RWPE1 (cell line): ENCODE measurements at regions of chr10 and their contacts with region 1.

Region 1: GRCh38 chr10:113089551-113089950 is 139.5 kb downstream of the TCF7L2 start:
- DNase-seq: no peak
- H3K27ac ChIP-seq: peak overlapping the region; percentile 27
- CTCF ChIP-seq: no peak

Region 2: DNA sequence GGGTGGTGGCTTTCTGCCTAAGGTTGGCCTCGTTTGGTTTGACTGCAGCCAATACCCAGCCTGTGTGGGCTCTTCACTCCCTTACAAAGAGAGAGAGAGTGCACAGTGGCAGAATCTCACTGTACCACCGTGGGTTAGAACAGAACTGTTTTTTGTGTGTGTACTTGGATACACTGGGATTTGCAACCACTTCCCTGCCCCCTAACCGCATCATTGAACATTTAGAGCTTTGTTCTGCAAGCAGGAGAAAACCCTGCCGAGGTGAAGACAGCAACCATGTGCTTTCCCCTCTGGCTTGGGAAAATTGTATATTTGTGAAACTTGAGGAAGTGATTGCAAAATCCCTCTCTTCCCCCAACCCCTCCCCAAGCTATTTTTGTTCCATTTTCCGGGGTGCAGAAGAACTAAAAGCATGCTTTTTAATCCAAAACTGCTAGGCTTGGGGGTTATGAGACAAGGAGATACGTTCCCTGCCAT is 61.7 kb after region 1 on chr10:
- CTCF ChIA-PET with region 1: no interaction called
- POLR2A ChIA-PET with region 1: no interaction called
- DNase-seq: no peak
- H3K27ac ChIP-seq: no peak overlapping the region
- CTCF ChIP-seq: no peak

Region 3: DNA sequence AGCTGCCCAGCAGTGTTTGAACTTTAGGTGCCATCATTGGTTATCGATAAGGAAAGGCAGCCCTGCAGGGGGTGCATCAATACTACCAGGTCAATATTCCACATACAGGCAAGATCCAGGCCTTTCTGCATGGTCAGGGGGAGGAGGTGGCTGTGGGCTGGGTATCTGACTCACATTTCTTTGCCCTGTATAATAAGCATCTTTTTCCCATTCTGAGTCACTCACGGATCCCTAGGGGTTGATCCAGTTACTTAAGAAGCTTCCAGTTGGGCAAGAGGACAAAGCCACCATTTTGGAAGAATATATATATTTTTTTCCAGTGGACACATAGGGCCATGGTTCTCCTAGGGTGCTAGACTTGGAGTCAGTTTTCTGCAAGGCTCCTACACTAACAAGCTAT is 349.1 kb after region 1 on chr10:
- CTCF ChIA-PET with region 1: no interaction called
- POLR2A ChIA-PET with region 1: no interaction called
- DNase-seq: peak; percentile 16
- H3K27ac ChIP-seq: no peak overlapping the region
- CTCF ChIP-seq: no peak

Region 4: DNA sequence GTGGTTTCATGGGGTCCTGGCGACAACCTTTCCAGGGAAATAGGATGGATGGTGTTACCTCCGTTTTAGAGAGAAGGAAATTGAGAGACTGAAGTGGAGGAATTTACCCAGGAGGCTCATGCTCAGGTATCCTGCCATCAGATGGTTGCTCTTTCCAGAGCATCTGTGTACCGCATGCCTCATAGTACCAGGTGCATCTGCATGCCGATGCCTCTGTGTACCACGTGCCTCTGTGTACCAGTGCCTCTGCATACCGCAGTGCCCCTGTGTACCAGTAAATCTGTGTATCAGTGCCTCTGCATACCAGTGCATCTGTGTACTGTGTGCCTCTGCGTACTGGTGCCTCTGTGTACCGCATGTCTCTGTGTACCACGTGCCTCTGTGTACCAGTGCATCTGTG is 1152.7 kb after region 1 on chr10:
- CTCF ChIA-PET with region 1: no interaction called
- POLR2A ChIA-PET with region 1: interaction called, 10 read pairs
- DNase-seq: no peak
- H3K27ac ChIP-seq: no peak overlapping the region
- CTCF ChIP-seq: no peak